Cardiac septum (tissue), 1 donor: ENCODE measurements at regions of chr22 and their contacts with region 1.

Region 1: GRCh38 chr22:17906978-17907747 is 117.2 kb downstream of the MICAL3 start:
- DNase-seq: no peak

Region 2: DNA sequence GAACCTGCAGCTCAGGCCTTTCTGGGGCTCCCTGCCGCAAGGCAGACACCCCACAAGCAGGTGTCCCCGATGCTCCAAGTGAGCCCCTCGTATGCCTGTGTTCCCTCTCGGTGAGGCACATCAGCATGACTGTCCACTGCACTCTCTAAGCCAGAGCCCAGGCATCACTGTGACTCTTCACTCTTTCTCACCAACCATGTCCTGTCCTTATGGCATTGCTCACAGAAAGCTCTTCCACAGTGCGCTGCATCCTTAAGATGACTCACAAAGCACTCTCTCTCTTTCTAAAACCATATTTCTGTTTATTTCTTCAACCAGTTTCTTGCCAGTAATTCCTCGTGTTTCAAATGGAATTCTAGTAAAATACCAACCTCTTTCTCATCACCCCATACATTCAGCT is 917.2 kb before region 1 on chr22:
- intact Hi-C with region 1: no loop called
- DNase-seq: no peak

Region 3: GRCh38 chr22:17477391-17477833 is 429.8 kb before region 1 on chr22:
- intact Hi-C with region 1: no loop called
- DNase-seq: no peak

Region 4: DNA sequence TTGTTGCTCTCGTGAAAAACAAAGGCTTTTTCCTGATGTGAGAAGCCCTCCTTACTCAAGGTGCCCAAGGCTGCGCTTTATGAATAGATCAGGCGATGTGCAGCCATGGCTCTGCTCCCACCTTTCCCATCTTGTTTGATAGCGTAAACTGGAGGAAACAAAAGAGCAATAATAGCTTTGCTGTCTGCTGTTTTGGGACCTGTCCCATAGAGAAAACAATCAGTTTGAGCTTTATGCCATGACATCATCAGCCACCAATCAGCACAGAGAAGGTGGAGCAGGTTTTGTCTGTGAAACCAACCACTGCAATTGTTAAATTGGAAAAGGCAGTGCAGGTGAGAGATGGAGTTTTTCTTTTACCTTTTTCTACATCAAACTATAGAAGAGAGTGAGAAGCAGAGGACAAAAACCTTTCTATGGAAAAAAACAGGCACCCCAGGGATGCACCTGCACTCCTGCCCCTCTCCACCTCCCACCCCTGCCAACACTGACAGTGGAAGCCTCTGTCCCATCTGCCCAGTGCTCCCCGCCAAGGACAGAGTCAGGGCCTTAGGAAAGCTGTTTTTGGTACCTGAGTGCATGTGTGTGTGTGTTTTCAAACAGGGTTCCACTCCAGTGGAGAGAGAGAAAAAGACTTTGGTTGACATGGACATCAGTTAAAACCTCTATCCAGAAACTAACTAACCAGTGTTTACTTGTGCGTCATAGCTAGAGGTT is 36.5 kb after region 1 on chr22:
- intact Hi-C with region 1: loop called (anchors 5 kb)
- DNase-seq: no peak

Region 5: DNA sequence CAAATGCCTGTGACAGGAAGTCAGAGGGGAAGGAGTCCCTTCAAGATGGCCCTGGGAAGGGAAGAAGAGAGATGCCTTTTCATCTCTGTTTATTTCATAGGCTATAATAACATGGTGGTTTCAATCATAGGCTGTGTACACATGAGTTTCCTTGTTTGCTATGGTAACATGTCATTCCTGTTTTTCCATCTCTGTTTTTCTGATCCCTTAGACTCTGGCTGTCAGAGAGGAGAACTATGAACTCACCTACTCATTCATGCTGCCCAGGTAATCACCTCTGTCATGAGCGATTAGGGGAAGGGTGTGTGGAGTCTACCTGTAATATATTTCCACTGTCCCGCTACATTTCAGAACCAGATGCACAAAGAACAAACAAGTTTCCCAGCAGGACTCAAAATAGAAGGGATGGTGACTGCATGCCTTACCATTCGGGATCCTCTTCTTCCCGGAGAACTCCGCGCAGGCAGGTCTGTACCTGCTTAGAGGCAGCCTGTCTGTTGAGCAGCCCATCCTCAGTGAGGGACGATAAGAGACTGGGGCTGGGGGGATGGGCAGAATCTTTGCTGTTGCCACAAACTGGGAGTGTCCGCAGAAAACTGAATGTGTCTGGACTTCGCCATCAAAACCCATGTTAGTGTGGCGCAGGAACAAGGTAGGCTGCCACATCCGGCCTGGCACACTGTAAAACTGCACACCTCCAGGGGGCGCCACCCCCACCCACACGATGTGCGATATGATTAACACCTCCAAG is 163.6 kb after region 1 on chr22:
- intact Hi-C with region 1: loop called (anchors 5 kb)
- DNase-seq: no peak